Lower lobe of right lung (tissue), 2 donors: ENCODE measurements at regions of chr16 and their contacts with region 1.

Region 1: GRCh38 chr16:13231365-13231764 is 330.0 kb downstream of the SHISA9 start:
- DNase-seq: no peak
- ATAC-seq: no peak
- H3K4me3 ChIP-seq: no peak overlapping the region
- H3K27ac ChIP-seq: no peak overlapping the region
- H3K4me1 ChIP-seq: no peaks in the 10 kb centered on the region
- H3K27me3 ChIP-seq: no peaks in the 10 kb centered on the region
- CTCF ChIP-seq: no peak

Region 2: GRCh38 chr16:13098536-13099127 is 132.7 kb before region 1 on chr16:
- intact Hi-C with region 1: no loop called
- DNase-seq: no peak
- ATAC-seq: no peak
- H3K4me3 ChIP-seq: no peak overlapping the region
- H3K27ac ChIP-seq: no peak overlapping the region
- H3K4me1 ChIP-seq: no peaks in the 10 kb centered on the region
- H3K27me3 ChIP-seq: no peaks in the 10 kb centered on the region
- CTCF ChIP-seq: no peak

Region 3: GRCh38 chr16:13176711-13177110 is 54.7 kb before region 1 on chr16:
- intact Hi-C with region 1: loop called (anchors 10 kb)
- DNase-seq: no peak
- ATAC-seq: no peak
- H3K4me3 ChIP-seq: no peak overlapping the region
- H3K27ac ChIP-seq: no peak overlapping the region
- H3K4me1 ChIP-seq: no peaks in the 10 kb centered on the region
- H3K27me3 ChIP-seq: no peaks in the 10 kb centered on the region
- CTCF ChIP-seq: no peak